ENCODE measurements at regions of chr11 and their contacts with region 1.

Region 1: GRCh38 chr11:47373876-47374720 is 4.2 kb downstream of the SPI1 start:
- DNase-seq: peak; percentile 89
- H3K4me3 Mint-ChIP-seq: no peak overlapping the region
- H3K27ac Mint-ChIP-seq: no peak overlapping the region
- H3K4me1 Mint-ChIP-seq: peaks cover 23% of the 10 kb centered on the region
- H3K27me3 Mint-ChIP-seq: no peaks in the 10 kb centered on the region

Region 2: GRCh38 chr11:47387911-47388678 is 14.0 kb after region 1 on chr11:
- CTCF ChIA-PET with region 1: interaction called, 32 read pairs
- intact Hi-C with region 1: no loop called
- DNase-seq: no peak
- H3K4me3 Mint-ChIP-seq: no peak overlapping the region
- H3K27ac Mint-ChIP-seq: no peak overlapping the region
- H3K4me1 Mint-ChIP-seq: peaks cover 14% of the 10 kb centered on the region
- H3K27me3 Mint-ChIP-seq: no peaks in the 10 kb centered on the region

Region 3: DNA sequence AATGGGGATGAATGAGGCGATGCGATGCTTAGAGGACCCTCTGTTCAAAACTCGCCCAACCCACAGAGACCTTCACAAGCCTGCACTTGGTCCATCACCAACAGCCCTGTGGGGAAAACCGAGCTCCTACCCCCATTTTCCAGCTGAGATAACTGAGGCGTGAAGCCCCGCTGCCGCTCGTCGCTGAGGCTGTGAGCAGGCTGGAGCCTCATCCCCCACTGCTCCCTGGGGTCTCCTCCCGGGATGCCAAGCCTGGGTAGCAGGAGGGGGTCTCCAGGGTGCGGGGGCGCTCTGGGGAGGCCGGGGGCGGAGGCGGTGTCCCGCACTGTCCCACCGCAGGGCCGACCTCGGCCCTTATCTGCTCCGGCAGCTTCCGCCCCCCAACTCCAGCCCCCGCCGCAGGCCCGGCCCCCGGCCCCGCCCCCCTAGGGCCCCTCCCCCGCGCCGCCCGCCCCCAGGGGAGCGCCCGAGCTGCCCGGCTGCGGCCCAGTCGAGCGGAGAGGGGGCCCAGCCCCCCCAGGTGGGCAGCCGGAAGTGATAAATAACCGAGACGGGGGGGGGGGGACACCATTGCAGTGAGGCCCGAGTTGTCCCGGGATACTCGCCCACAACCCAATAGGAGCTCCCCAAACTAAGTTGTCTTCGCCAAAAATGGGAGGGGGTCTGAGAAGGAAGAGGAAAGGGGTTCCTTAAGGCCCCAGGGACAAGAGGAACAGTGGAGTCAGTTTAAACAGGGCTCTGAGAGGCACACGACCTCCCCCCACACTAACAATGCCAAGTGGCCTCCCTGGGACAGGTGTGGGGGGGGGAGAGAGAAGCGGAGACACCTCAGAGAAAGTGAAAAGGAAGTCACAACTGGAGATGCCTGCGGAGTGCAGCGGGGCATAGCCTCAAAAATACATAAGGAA is 26.0 kb after region 1 on chr11:
- CTCF ChIA-PET with region 1: interaction called, 19 read pairs
- intact Hi-C with region 1: no loop called
- DNase-seq: peak; percentile 36
- H3K4me3 Mint-ChIP-seq: peak overlapping the region; percentile 74
- H3K27ac Mint-ChIP-seq: peak overlapping the region; percentile 79
- H3K4me1 Mint-ChIP-seq: peaks cover 22% of the 10 kb centered on the region
- H3K27me3 Mint-ChIP-seq: no peaks in the 10 kb centered on the region

Region 4: DNA sequence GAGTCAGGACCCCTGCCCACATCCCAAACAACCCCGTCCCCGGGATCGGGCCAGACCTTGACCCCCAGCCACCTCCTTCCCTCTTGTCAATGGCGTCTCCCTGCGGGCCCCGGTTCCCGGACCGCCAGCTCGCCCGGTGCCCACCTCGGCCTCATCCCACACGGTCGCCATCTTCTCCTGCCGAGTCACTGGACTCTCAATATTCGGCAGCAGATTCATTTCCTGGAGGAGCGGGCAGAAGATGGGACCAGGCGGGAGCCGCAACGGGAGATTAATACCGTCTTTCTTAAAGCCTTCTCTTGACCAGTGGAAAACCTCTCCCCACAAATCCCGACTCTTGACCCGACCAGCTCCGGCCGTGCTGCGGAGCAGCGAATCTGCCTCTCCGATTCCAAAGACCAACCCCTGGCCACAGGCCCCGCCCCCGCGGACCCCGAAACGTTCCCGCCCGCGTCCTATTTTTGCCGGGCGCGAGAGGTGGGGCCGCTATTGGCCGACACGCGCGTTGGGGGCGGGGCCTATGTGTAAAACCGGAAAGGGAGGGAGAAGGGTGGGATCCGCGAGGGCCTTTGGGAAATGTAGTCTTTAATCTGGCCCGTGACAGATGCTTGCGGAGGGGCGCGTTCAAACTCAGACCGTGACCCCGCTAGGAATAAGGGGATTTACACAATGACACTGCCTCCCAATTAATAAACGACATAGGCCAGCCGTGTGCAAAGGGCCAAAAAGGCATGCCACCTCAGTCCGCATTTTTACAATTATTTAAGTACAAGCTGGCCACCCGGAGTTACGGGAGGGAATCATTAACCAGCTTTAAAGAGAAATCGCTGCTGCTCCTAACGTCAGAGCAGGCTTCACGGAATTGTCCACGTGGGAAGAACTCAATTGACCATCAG is 52.2 kb after region 1 on chr11 and contains the start of gene PSMC3:
- CTCF ChIA-PET with region 1: interaction called, 24 read pairs
- intact Hi-C with region 1: no loop called
- DNase-seq: peak; percentile 99
- H3K4me3 Mint-ChIP-seq: peak within 1 kb of the TSS; percentile 98
- H3K27ac Mint-ChIP-seq: peak within 1 kb of the TSS; percentile 98
- H3K4me1 Mint-ChIP-seq: peaks cover 26% of the 10 kb centered on the region
- H3K27me3 Mint-ChIP-seq: no peaks in the 10 kb centered on the region
- total RNA-seq, gene PSMC3: 127 to 129 TPM

Region 5: GRCh38 chr11:47616726-47617416 is 242.8 kb after region 1 on chr11:
- CTCF ChIA-PET with region 1: interaction called, 4 read pairs
- intact Hi-C with region 1: loop called (anchors 1 kb)
- DNase-seq: peak; percentile 66
- H3K4me3 Mint-ChIP-seq: no peak overlapping the region
- H3K27ac Mint-ChIP-seq: no peak overlapping the region
- H3K4me1 Mint-ChIP-seq: no peaks in the 10 kb centered on the region
- H3K27me3 Mint-ChIP-seq: no peaks in the 10 kb centered on the region

Region 6: GRCh38 chr11:48109046-48109666 is 735.1 kb after region 1 on chr11:
- CTCF ChIA-PET with region 1: no interaction called
- intact Hi-C with region 1: loop called (anchors 1 kb)
- DNase-seq: no peak
- H3K4me3 Mint-ChIP-seq: no peak overlapping the region
- H3K27ac Mint-ChIP-seq: peak overlapping the region; percentile 75
- H3K4me1 Mint-ChIP-seq: peaks cover 46% of the 10 kb centered on the region
- H3K27me3 Mint-ChIP-seq: no peaks in the 10 kb centered on the region

Measured in activated naive CD4-positive, alpha-beta T cell treated with anti-CD3 and anti-CD28 coated beads for 36 hours (primary cell).